Activated CD8-positive, alpha-beta memory T cell treated with anti-CD3 and anti-CD28 coated beads, Interleukin-2, amount 10 ng/mL, durations not matched to agents 7 days and 5 days (primary cell): ENCODE measurements at regions of chr15 and their contacts with region 1.

Region 1: GRCh38 chr15:40108855-40109735 is at the start of gene BMF:
- DNase-seq: peak; percentile 97
- ATAC-seq: peak; percentile 84
- H3K4me3 Mint-ChIP-seq: peak within 1 kb of the TSS; percentile 82
- H3K27ac Mint-ChIP-seq: peak within 1 kb of the TSS; percentile 76
- H3K4me1 Mint-ChIP-seq: peaks cover 46% of the 10 kb centered on the region
- H3K27me3 Mint-ChIP-seq: peaks cover 28% of the 10 kb centered on the region
- total RNA-seq, gene BMF: 3.6 to 13.0 TPM

Region 2: DNA sequence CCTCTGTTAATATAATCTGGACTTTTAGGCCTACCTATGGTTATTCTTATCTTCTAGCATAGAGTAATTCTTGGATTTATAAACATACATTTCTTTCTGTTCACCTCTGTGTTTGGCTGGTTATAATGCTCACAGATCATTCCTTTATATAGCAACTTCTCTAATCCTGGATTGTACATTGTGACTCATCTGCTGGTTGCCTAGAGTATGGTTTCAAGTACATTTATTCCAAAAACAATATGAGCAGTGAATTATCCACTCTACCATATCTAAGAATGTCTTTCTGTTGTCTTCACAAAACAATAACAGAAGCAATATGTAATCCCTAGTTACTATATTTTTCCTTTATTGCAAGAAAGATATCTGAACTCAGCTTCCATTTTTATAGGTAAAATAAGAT is 361.8 kb before region 1 on chr15:
- CTCF ChIA-PET with region 1: no interaction called
- DNase-seq: no peak
- ATAC-seq: no peak
- H3K4me3 Mint-ChIP-seq: no peak overlapping the region
- H3K27ac Mint-ChIP-seq: no peak overlapping the region
- H3K4me1 Mint-ChIP-seq: peaks cover 3% of the 10 kb centered on the region
- H3K27me3 Mint-ChIP-seq: peaks cover 39% of the 10 kb centered on the region

Region 3: GRCh38 chr15:40016224-40016865 is 92.8 kb before region 1 on chr15:
- CTCF ChIA-PET with region 1: no interaction called
- DNase-seq: no peak
- ATAC-seq: no peak
- H3K4me3 Mint-ChIP-seq: no peak overlapping the region
- H3K27ac Mint-ChIP-seq: no peak overlapping the region
- H3K4me1 Mint-ChIP-seq: no peaks in the 10 kb centered on the region
- H3K27me3 Mint-ChIP-seq: no peaks in the 10 kb centered on the region

Region 4: GRCh38 chr15:40044717-40045571 is 64.2 kb before region 1 on chr15:
- CTCF ChIA-PET with region 1: interaction called, 324 read pairs
- DNase-seq: peak; percentile 90
- ATAC-seq: peak; percentile 92
- H3K4me3 Mint-ChIP-seq: peak overlapping the region; percentile 22
- H3K27ac Mint-ChIP-seq: peak overlapping the region; percentile 62
- H3K4me1 Mint-ChIP-seq: peaks cover 69% of the 10 kb centered on the region
- H3K27me3 Mint-ChIP-seq: no peaks in the 10 kb centered on the region

Region 5: DNA sequence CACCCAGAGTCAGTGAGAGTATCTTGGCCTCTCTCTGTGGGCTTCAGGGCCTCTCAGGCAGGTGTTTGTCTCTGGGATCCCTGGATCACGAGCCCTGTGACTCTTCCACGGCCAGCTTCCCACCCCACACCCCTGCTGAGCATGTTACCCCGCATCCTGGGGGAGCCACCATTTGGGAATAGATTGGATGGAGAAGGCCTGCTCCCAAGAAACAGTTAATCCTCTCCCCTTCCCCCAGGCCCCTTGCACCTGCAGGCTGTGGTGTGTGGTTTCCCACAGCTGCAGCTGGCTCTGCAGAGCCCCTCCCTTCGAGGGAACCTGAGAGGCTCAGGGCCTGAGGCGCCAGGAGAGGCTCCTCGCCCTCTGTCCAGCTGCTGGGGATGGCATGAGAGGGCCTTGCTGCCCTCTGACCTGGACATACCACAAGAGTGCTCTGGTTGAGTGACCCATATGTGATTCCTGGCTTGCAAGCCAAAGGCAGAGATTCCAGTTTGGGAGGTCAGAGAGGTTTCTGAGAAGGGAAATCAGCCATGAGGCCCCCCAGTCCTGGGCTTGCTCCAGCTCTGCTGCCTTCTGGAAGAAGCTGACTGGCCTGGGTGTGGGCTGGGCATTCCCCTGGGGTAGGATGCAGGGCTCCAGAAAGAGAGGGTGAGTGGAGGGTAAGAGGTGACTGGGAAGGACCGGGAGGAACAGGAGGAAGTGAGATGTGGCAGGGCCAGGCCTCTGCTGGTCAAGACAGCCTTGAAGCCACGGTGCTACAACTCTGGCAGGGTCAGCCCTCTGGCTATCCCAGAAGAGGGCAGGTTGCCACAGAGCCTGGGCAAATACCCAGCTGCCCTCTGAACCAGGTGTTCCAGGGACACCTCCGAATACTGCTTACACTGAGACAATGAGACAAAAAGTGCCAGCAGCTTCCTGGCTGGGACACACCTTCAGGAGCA is 54.2 kb before region 1 on chr15:
- CTCF ChIA-PET with region 1: interaction called, 324 read pairs
- DNase-seq: peak; percentile 70
- ATAC-seq: no peak
- H3K4me3 Mint-ChIP-seq: no peak overlapping the region
- H3K27ac Mint-ChIP-seq: peak overlapping the region; percentile 63
- H3K4me1 Mint-ChIP-seq: peaks cover 53% of the 10 kb centered on the region
- H3K27me3 Mint-ChIP-seq: peaks cover 5% of the 10 kb centered on the region

Region 6: DNA sequence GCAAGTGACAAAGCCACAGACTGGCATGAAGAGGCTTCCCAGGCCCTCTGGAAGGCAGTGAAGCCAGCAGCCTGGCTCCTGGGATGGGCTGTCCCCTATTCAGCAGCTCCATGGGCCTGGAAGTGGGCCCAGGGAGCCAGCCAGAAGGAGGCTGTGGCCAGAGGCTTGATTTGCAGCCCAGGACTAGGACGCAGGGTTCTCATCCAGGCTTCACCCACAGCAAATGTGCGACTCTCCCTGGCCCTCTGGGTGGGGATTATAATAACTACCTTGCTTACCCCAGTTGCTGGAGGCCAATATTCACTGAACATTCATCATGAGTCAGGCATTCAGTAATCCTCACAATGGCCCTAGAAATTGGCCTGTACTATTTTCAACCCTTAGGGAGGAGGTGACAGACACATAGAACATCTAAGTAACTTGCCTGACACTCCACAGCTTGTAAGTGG is 45.5 kb before region 1 on chr15:
- CTCF ChIA-PET with region 1: interaction called, 45 read pairs
- DNase-seq: no peak
- ATAC-seq: no peak
- H3K4me3 Mint-ChIP-seq: no peak overlapping the region
- H3K27ac Mint-ChIP-seq: no peak overlapping the region
- H3K4me1 Mint-ChIP-seq: peaks cover 25% of the 10 kb centered on the region
- H3K27me3 Mint-ChIP-seq: no peaks in the 10 kb centered on the region

Region 7: GRCh38 chr15:40098489-40099261 is 10.4 kb before region 1 on chr15:
- CTCF ChIA-PET with region 1: interaction called, 139 read pairs
- DNase-seq: peak; percentile 87
- ATAC-seq: peak; percentile 99
- H3K4me3 Mint-ChIP-seq: peak overlapping the region; percentile 31
- H3K27ac Mint-ChIP-seq: peak overlapping the region; percentile 89
- H3K4me1 Mint-ChIP-seq: peaks cover 77% of the 10 kb centered on the region
- H3K27me3 Mint-ChIP-seq: no peaks in the 10 kb centered on the region

Region 8: GRCh38 chr15:40121911-40122638 is 13.0 kb after region 1 on chr15:
- CTCF ChIA-PET with region 1: interaction called, 72 read pairs
- DNase-seq: no peak
- ATAC-seq: no peak
- H3K4me3 Mint-ChIP-seq: no peak overlapping the region
- H3K27ac Mint-ChIP-seq: no peak overlapping the region
- H3K4me1 Mint-ChIP-seq: peaks cover 1% of the 10 kb centered on the region
- H3K27me3 Mint-ChIP-seq: peaks cover 10% of the 10 kb centered on the region

Region 9: GRCh38 chr15:40160689-40161688 is 51.9 kb after region 1 on chr15 and contains the start of gene BUB1B:
- CTCF ChIA-PET with region 1: interaction called, 31 read pairs
- DNase-seq: peak; percentile 97
- ATAC-seq: peak; percentile 93
- H3K4me3 Mint-ChIP-seq: no peak within 1 kb of the TSS
- H3K27ac Mint-ChIP-seq: no peak within 1 kb of the TSS
- H3K4me1 Mint-ChIP-seq: peaks cover 15% of the 10 kb centered on the region
- H3K27me3 Mint-ChIP-seq: no peaks in the 10 kb centered on the region
- total RNA-seq, gene BUB1B: 89.5 to 107 TPM

Region 10: DNA sequence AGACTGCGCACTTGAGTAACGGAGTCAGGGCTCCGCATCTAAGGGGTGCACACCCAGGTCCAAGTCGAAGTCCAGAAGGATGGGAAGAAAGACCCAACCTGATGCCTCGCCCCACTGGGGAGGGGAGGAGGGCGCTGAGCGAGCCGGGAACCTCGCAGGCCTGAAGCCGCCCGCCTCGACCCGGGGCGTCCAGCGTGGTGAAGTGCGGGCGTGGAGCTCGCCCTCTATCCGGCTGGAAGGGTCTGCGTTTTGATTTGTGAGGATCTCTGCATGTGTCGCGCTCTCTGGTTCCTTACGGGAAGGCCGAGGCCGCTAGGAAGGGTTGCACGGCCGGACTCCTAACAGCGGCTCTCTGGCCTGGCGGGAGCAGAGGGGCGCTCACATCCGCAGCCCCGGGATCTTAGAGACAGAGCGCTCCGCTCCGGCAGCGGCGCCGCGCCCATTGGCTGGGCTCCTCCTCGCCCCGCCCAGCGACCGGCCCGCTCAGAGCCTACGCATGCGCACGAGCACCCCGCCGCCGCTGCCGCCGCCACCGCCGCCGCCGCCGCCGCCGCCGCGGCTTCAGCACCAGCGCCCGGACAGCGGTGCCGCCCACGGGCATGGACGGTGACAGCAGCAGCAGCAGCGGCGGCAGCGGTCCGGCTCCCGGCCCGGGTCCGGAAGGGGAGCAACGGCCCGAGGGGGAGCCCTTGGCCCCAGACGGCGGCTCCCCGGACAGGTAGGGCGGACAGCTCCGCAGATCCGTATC is 248.8 kb after region 1 on chr15 and contains the start of gene DISP2:
- CTCF ChIA-PET with region 1: no interaction called
- DNase-seq: peak; percentile 89
- ATAC-seq: peak; percentile 93
- H3K4me3 Mint-ChIP-seq: peak within 1 kb of the TSS; percentile 70
- H3K27ac Mint-ChIP-seq: no peak within 1 kb of the TSS
- H3K4me1 Mint-ChIP-seq: peaks cover 9% of the 10 kb centered on the region
- H3K27me3 Mint-ChIP-seq: peaks cover 10% of the 10 kb centered on the region
- total RNA-seq, gene DISP2: 0.23 to 0.37 TPM